OCI-LY7 (cell line): ENCODE measurements at regions of chr11 and their contacts with region 1.

Region 1: DNA sequence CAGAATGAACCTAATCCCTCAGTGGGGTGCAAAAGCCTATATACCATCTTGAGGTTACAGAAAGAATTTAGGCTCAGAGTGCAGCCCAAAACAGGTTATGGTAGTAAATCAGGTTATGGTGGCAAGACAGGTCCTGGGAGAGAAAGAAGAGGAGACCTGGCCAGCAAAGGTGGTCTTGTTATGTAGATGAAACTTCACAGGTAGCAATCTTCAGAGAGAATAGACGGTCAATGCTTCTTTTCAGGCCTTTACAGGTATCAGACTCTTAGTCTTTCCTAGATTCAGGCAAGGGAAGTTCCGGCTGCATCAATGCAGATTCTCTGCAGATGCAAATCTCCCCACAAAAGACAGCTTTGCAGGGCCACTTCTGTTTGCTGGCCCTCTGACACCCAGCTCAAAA is 45.8 kb upstream of the SORL1 start:
- DNase-seq: peak; percentile 75
- H3K4me3 ChIP-seq: peak overlapping the region; percentile 56
- H3K27ac ChIP-seq: peak overlapping the region; percentile 92
- H3K4me1 ChIP-seq: peaks cover 71% of the 10 kb centered on the region
- CTCF ChIP-seq: no peak

Region 2: DNA sequence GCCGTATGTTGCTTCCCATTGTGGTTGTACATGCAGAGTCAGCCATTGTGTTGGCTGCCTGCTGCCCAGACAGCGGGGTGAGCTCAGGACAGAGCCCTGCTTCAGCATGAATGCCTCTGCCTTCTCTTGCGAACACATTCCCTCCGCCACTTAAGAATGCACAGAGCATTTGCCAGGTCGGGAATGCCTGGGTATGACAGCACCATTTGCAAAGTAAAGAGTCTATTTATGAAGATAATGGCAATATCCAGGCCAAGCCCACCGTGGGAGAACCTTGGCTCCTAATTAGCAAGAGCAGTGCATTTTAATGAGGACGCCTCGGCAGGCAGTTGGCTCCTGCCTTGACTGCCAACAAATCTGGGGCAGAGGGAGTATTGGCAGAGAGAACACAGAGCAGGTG is 16.6 kb before region 1 on chr11:
- CTCF ChIA-PET with region 1: interaction called, 11 read pairs
- POLR2A ChIA-PET with region 1: interaction called, 74 read pairs
- intact Hi-C with region 1: no loop called
- DNase-seq: no peak
- H3K4me3 ChIP-seq: no peak overlapping the region
- H3K27ac ChIP-seq: no peak overlapping the region
- H3K4me1 ChIP-seq: peaks cover 88% of the 10 kb centered on the region
- CTCF ChIP-seq: no peak

Region 3: GRCh38 chr11:121417055-121417551 is 10.8 kb after region 1 on chr11:
- CTCF ChIA-PET with region 1: interaction called, 4 read pairs
- POLR2A ChIA-PET with region 1: interaction called, 104 read pairs
- intact Hi-C with region 1: no loop called
- DNase-seq: peak; percentile 41
- H3K4me3 ChIP-seq: no peak overlapping the region
- H3K27ac ChIP-seq: peak overlapping the region; percentile 91
- H3K4me1 ChIP-seq: peaks cover 79% of the 10 kb centered on the region
- CTCF ChIP-seq: no peak

Region 4: GRCh38 chr11:121431820-121432526 is 25.7 kb after region 1 on chr11:
- CTCF ChIA-PET with region 1: no interaction called
- POLR2A ChIA-PET with region 1: interaction called, 27 read pairs
- intact Hi-C with region 1: loop called (anchors 2 kb)
- DNase-seq: peak; percentile 26
- H3K4me3 ChIP-seq: peak overlapping the region; percentile 37
- H3K27ac ChIP-seq: peak overlapping the region; percentile 99
- H3K4me1 ChIP-seq: peaks cover 99% of the 10 kb centered on the region
- CTCF ChIP-seq: no peak